ENCODE measurements at regions of chr11 and their contacts with region 1.

Region 1: DNA sequence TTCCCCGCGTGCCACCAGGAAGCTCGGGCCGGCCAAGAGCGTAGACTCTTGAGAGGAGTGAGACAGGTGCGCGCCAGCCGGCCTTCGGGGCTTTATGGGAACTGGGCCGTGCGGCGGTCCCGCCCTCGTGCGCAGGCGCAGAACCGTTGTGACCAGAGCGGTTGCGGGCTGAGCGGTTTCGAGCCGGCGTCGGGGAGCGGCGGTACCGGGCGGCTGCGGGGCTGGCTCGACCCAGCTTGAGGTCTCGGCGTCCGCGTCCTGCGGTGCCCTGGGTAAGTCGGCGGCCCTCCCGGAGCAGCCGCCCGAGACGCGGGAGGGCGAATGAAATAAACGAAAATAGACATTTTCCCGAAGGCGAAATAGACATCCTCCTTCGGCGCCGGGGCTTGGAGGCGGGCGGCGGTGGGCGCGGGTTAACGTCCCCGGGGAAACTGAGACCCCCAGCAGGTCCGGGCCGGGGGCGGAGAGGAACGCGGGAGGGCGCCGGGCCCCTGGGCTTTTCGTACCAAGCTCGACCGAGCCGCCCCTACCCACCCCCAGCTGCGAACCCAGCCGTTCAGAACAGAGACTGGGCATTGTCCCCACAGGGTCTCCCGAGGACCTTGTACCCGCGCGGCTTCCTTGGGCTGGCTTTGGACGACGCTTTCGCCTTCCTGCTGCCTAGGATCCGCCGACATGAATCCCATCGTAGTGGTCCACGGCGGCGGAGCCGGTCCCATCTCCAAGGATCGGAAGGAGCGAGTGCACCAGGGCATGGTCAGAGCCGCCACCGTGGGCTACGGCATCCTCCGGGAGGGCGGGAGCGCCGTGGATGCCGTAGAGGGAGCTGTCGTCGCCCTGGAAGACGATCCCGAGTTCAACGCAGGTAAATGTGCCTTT is at the start of gene ASRGL1:
- DNase-seq: peak; percentile 81
- H3K4me3 Mint-ChIP-seq: peak within 1 kb of the TSS; percentile 82
- H3K27ac Mint-ChIP-seq: no peak within 1 kb of the TSS
- H3K4me1 Mint-ChIP-seq: peaks cover 8% of the 10 kb centered on the region
- H3K27me3 Mint-ChIP-seq: peaks cover 8% of the 10 kb centered on the region
- total RNA-seq, gene ASRGL1: 7.7 to 8.2 TPM

Region 2: GRCh38 chr11:62054484-62055121 is 282.9 kb before region 1 on chr11:
- CTCF ChIA-PET with region 1: no interaction called
- POLR2A ChIA-PET with region 1: no interaction called
- intact Hi-C with region 1: no loop called
- DNase-seq: peak; percentile 22
- H3K4me3 Mint-ChIP-seq: no peak overlapping the region
- H3K27ac Mint-ChIP-seq: no peak overlapping the region
- H3K4me1 Mint-ChIP-seq: no peaks in the 10 kb centered on the region
- H3K27me3 Mint-ChIP-seq: peaks cover 3% of the 10 kb centered on the region

Region 3: GRCh38 chr11:62256281-62256680 is 81.3 kb before region 1 on chr11:
- CTCF ChIA-PET with region 1: no interaction called
- POLR2A ChIA-PET with region 1: no interaction called
- intact Hi-C with region 1: no loop called
- DNase-seq: no peak
- H3K4me3 Mint-ChIP-seq: no peak overlapping the region
- H3K27ac Mint-ChIP-seq: no peak overlapping the region
- H3K4me1 Mint-ChIP-seq: no peaks in the 10 kb centered on the region
- H3K27me3 Mint-ChIP-seq: peaks cover 6% of the 10 kb centered on the region

Region 4: DNA sequence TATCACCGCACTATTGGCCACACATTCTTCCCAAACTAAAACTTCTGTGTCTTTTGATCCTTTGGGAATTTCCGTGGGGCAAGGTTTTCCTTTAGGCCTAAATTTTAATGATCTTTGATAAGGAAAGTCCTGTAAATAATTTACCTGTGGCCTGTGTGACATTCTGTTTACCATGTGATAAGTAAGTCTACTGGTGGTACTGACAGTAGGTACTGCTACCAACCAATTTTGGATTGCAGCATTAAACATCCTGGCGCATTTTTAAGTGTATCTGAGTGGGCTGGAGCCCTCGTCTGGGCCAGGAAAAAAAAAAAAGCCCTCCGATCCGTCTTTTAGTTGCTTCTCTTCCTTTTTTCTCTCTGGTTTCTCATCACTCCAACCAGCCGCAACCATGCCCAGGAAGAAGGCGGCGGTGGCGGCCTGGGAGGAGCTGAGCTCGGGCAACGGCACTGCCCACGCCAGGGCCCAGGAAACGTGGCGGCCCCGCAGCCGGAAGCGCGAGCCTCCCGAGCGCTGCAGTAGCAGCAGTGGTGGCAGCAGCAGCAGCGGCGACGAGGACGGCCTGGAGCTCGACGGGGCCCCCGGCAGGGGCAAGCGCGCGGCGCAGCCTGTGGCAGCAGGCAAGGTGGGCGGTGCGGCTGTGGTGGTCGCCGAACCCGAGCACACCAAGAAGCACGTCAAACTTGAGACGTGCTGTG is 33.4 kb after region 1 on chr11:
- CTCF ChIA-PET with region 1: interaction called, 42 read pairs
- POLR2A ChIA-PET with region 1: interaction called, 4 read pairs
- intact Hi-C with region 1: no loop called
- DNase-seq: peak; percentile 69
- H3K4me3 Mint-ChIP-seq: peak overlapping the region; percentile 55
- H3K27ac Mint-ChIP-seq: no peak overlapping the region
- H3K4me1 Mint-ChIP-seq: peaks cover 13% of the 10 kb centered on the region
- H3K27me3 Mint-ChIP-seq: no peaks in the 10 kb centered on the region

Measured in activated CD4-positive, alpha-beta memory T cell treated with anti-CD3 and anti-CD28 coated beads for 36 hours (primary cell).